Posterior vena cava (tissue), 2 donors: ENCODE measurements at regions of chr5 and their contacts with region 1.

Region 1: GRCh38 chr5:32419791-32420190 is 24.7 kb downstream of the ZFR start:
- DNase-seq: no peak

Region 2: GRCh38 chr5:31133488-31133887 is 1286.3 kb before region 1 on chr5:
- intact Hi-C with region 1: no loop called
- DNase-seq: no peak

Region 3: GRCh38 chr5:31962871-31963307 is 456.9 kb before region 1 on chr5:
- intact Hi-C with region 1: loop called in 1 of 2 experiments (anchors 5 kb)
- DNase-seq: no peak

Region 4: DNA sequence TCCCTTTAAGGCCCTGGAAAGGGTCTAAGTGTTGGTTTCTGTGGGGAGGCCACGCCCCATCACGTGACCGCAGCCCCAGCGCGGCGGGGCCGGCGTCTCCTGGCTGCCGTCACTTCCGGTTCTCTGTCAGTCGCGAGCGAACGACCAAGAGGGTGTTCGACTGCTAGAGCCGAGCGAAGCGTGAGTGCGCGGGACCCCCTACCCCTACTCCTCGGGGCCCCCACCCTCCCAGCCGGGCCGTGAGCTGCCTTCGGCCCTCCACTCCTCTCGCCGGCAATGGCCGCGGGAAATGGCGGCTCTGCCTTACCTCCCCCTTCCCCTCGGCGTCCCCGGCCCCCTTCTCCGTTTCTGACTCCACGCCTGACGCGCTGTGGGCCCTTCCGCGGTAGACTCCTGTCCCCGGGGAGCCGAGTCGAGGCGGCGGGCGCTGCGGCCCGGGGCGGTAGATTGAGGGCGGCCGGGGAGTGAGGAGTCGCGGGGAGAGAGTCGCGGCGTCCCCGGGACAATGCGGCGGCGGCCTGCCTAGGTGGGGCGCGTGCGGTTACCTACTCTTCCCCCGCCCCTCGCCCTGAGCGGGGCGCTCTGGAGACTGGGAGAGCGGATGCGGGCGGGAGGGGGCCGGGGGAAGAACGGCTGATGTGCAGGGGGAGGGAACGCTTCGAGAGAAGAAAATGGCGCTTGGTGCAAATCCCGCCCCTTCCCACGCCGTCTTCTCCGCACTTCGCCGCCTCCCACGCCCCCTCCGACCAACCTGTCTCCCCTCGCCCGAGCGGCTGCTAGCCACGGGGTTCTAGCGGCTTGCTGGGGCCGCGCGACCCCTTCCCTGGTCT is 165.9 kb after region 1 on chr5 and contains the start of gene SUB1:
- intact Hi-C with region 1: loop called in 1 of 2 experiments (anchors 10 kb)
- DNase-seq: peak; percentile 98
- total RNA-seq, gene SUB1: 151 to 179 TPM